ENCODE measurements at regions of chr6 and their contacts with region 1.

Region 1: DNA sequence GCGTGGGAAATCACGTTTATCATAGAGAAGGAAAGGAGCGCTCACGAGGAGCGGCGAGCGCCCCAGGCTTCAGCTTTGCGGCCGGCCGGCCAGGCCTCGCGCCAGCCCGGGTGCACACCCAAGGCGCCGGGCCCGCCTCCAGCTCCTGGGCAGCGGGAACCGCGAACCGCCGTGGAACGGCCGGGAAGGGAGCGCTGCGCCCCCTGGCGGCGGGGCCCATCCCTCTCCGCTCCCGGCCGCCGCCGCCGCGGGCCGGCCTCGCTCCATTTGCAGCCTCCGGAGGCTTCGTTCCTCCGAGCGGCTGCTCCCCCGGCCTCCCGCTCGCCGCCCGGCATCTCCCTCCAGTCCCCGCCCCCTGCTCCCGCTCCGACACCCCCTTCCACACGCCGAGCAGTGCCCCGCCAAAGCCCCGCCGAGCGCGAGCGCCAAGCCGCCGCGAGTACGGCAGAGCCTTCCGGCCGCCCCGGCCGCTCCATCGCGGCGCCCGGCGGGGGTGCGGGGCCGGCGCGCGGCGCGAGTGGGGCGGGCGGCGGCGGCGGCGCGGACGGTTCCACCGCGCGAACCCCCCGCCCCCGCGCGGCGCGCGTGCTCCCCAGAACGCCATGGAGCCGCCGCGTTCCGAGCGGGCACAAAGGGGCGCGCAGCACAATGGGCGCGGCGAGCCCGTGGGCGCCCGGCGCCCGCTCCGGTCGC is 956 bp downstream of the BEND3 start:
- DNase-seq: no peak
- H3K4me3 ChIP-seq: peak overlapping the region; percentile 63
- CTCF ChIP-seq: peak; percentile 72

Region 2: GRCh38 chr6:107030151-107030550 is 84.2 kb before region 1 on chr6:
- CTCF ChIA-PET with region 1: interaction called, 22 read pairs
- POLR2A ChIA-PET with region 1: no interaction called
- DNase-seq: no peak
- H3K4me3 ChIP-seq: no peak overlapping the region
- CTCF ChIP-seq: no peak

Region 3: DNA sequence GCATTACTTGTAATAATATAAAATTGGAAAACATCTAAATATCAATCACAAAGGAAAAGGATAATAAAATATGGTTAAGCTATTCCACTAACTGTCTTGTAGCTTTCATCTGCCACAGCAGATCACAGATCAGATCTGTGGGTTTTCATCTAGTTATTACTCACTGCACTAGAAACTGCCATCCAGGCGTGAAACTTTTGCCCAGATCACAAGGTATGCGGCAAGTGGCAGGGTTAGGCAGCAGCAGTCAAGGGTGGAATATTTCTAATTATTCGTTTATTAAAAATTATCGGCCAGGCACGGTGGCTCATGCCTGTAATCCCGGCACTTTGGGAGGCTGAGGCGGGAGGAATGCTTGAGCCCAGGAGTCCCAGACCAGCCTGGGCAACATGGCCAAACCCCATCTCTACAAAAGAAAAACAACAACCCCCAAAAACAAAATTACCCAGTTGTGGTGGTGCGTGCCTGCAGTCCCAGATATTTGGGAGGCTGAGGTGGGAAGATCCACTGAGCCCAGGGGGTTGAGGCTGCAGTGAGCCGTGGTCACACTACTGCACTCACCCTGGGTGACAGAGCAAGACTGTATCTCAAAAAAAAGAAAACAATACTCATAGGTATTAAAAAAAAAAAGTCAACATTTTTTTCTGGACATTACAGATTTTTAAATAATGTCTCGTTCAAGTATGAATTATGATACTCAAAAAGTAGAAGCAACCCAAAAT is 31.2 kb before region 1 on chr6:
- CTCF ChIA-PET with region 1: interaction called, 11 read pairs
- POLR2A ChIA-PET with region 1: no interaction called
- DNase-seq: no peak
- H3K4me3 ChIP-seq: no peak overlapping the region
- CTCF ChIP-seq: no peak

Region 4: GRCh38 chr6:107102414-107102990 is 11.9 kb before region 1 on chr6:
- CTCF ChIA-PET with region 1: interaction called, 14 read pairs
- POLR2A ChIA-PET with region 1: no interaction called
- DNase-seq: no peak
- H3K4me3 ChIP-seq: no peak overlapping the region
- CTCF ChIP-seq: no peak

Region 5: DNA sequence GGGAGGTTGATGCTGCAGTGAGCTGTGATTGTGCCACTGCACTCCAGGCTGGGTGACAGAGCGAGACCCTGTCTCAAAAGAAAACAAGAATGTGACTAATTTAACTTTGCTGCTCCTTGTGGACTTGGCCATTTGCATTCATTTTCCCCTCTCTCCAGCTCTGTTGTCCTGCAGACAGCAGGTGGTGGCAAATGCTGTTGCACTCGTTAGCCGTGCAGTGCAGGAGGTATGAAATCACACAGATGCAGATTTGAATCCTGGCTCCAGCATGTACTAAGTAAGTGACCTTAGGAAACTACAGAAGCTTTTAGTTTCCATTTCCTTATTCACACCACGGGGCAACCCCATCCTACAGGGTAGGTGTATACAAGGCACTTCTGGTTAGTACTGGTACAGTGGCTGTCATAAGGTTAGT is 10.6 kb after region 1 on chr6:
- CTCF ChIA-PET with region 1: interaction called, 10 read pairs
- POLR2A ChIA-PET with region 1: no interaction called
- DNase-seq: no peak
- H3K4me3 ChIP-seq: no peak overlapping the region
- CTCF ChIP-seq: no peak

Region 6: GRCh38 chr6:107386340-107386739 is 272.0 kb after region 1 on chr6:
- CTCF ChIA-PET with region 1: no interaction called
- POLR2A ChIA-PET with region 1: no interaction called
- DNase-seq: no peak
- H3K4me3 ChIP-seq: no peak overlapping the region
- CTCF ChIP-seq: no peak

Region 7: GRCh38 chr6:107624541-107624940 is 510.2 kb after region 1 on chr6:
- CTCF ChIA-PET with region 1: no interaction called
- POLR2A ChIA-PET with region 1: no interaction called
- DNase-seq: no peak
- H3K4me3 ChIP-seq: no peak overlapping the region
- CTCF ChIP-seq: no peak